MCF 10A (cell line): ENCODE measurements at regions of chr3 and their contacts with region 1.

Region 1: GRCh38 chr3:45938864-45939263 is 4.4 kb upstream of the CXCR6 start:
- DNase-seq: peak; percentile 82
- H3K4me3 Mint-ChIP-seq: no peak overlapping the region
- H3K27ac Mint-ChIP-seq: no peak overlapping the region
- H3K4me1 Mint-ChIP-seq: peaks cover 6% of the 10 kb centered on the region
- H3K27me3 Mint-ChIP-seq: no peaks in the 10 kb centered on the region
- CTCF ChIP-seq: peak; percentile 79

Region 2: GRCh38 chr3:45516829-45517228 is 422.0 kb before region 1 on chr3:
- CTCF ChIA-PET with region 1: no interaction called
- POLR2A ChIA-PET with region 1: no interaction called
- intact Hi-C with region 1: loop called (anchors 10 kb)
- DNase-seq: no peak
- H3K4me3 Mint-ChIP-seq: no peak overlapping the region
- H3K27ac Mint-ChIP-seq: no peak overlapping the region
- H3K4me1 Mint-ChIP-seq: no peaks in the 10 kb centered on the region
- H3K27me3 Mint-ChIP-seq: no peaks in the 10 kb centered on the region
- CTCF ChIP-seq: no peak

Region 3: GRCh38 chr3:45958321-45958791 is 19.5 kb after region 1 on chr3:
- CTCF ChIA-PET with region 1: interaction called, 13 read pairs
- POLR2A ChIA-PET with region 1: no interaction called
- intact Hi-C with region 1: no loop called
- DNase-seq: no peak
- H3K4me3 Mint-ChIP-seq: no peak overlapping the region
- H3K27ac Mint-ChIP-seq: no peak overlapping the region
- H3K4me1 Mint-ChIP-seq: no peaks in the 10 kb centered on the region
- H3K27me3 Mint-ChIP-seq: no peaks in the 10 kb centered on the region
- CTCF ChIP-seq: no peak

Region 4: GRCh38 chr3:46208167-46208704 is 269.4 kb after region 1 on chr3 and contains the start of gene CCR1:
- CTCF ChIA-PET with region 1: no interaction called
- POLR2A ChIA-PET with region 1: no interaction called
- intact Hi-C with region 1: loop called (anchors 10 kb)
- DNase-seq: peak; percentile 62
- H3K4me3 Mint-ChIP-seq: no peak within 1 kb of the TSS
- H3K27ac Mint-ChIP-seq: no peak within 1 kb of the TSS
- H3K4me1 Mint-ChIP-seq: no peaks in the 10 kb centered on the region
- H3K27me3 Mint-ChIP-seq: no peaks in the 10 kb centered on the region
- CTCF ChIP-seq: peak; percentile 46
- total RNA-seq, gene CCR1: not detected in 2 replicates